ENCODE measurements at regions of chr3 and their contacts with region 1.

Region 1: GRCh38 chr3:28109829-28110228 is 131.6 kb upstream of the CMC1 start:
- DNase-seq: no peak
- ATAC-seq: no peak
- H3K4me3 ChIP-seq: no peak overlapping the region
- H3K27ac ChIP-seq: no peak overlapping the region
- H3K4me1 ChIP-seq: no peaks in the 10 kb centered on the region
- H3K27me3 ChIP-seq: no peaks in the 10 kb centered on the region
- CTCF ChIP-seq: no peak
- EP300 ChIP-seq: no peak
- POLR2A ChIP-seq: no peak
- RAD21 ChIP-seq: no peak

Region 2: DNA sequence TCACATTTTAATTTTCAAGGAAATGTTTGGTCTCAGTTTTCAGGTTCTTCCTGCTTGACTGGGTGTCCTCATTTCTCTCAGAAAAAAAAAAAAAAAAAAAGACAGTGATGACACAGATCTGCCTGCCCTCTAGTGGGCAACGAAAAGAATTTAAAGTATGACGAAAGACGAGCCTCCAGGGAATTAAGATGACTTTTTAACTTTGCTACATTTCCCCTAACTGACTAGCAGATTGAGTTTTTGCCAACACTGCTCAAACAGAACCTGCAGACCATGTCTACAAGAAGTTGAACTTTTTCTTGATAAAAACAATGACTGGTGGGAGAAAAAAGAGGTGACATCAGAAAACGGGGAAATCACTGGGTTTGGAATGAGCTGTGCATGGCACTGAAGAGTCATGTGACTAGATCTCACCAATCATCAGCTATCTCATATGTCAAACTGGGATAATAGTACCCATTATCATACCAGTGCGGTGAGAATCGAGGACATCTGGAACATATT is 428.5 kb before region 1 on chr3:
- CTCF ChIA-PET with region 1: no interaction called
- POLR2A ChIA-PET with region 1: no interaction called
- RAD21 ChIA-PET with region 1: no interaction called
- SMC1A ChIA-PET with region 1: no interaction called
- in situ Hi-C with region 1: no loop called
- intact Hi-C with region 1: no loop called
- DNase-seq: peak; percentile 38
- ATAC-seq: peak; percentile 87
- H3K4me3 ChIP-seq: no peak overlapping the region
- H3K27ac ChIP-seq: no peak overlapping the region
- H3K4me1 ChIP-seq: no peaks in the 10 kb centered on the region
- H3K27me3 ChIP-seq: no peaks in the 10 kb centered on the region
- CTCF ChIP-seq: peak; percentile 47 to 79 (median 61)
- EP300 ChIP-seq: no peak
- POLR2A ChIP-seq: no peak
- RAD21 ChIP-seq: peak; percentile 91

Region 3: DNA sequence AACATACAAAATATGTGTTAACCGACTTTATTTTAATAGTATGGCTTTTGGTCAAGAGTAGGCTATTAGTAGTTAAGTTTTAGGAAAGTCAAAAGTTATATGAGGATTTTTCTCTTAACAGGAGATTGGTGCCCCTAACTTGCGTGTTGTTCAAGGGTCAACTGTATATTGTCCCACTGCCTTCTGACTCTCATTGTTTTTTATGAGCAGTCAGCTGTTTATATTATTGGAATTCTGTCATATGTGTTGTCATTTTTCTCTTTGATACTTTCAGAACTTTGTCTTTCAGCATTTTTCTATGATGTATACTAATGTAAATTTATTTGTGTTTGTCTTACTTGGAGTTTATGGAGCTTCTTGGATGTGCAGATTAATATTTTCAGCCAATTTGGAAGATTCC is 10.5 kb before region 1 on chr3:
- CTCF ChIA-PET with region 1: interaction called, 3 read pairs
- POLR2A ChIA-PET with region 1: interaction called, 3 read pairs
- RAD21 ChIA-PET with region 1: interaction called, 3 read pairs
- SMC1A ChIA-PET with region 1: interaction called, 10 read pairs
- in situ Hi-C with region 1: no loop called
- intact Hi-C with region 1: no loop called
- DNase-seq: no peak
- ATAC-seq: no peak
- H3K4me3 ChIP-seq: no peak overlapping the region
- H3K27ac ChIP-seq: no peak overlapping the region
- H3K4me1 ChIP-seq: no peaks in the 10 kb centered on the region
- H3K27me3 ChIP-seq: no peaks in the 10 kb centered on the region
- CTCF ChIP-seq: no peak
- EP300 ChIP-seq: no peak
- POLR2A ChIP-seq: no peak
- RAD21 ChIP-seq: no peak

Region 4: DNA sequence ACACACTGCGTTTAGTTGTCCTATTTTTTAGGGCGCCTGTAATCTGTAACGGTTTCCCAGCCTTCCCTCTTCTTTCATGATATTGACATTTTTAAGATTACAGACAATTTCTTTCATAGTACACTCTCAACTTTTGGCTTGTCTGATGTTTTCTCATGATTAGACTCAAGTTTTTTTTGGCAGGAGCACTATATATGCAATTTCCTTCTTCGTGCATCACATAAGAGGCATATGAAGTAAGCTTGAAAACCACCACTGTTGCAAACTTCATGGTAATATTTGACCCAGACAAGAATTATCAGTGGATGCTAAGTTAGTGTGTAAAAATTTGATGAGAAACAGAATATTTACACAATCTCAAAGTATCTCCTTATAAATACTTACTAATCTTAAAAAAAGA is 12.4 kb after region 1 on chr3:
- CTCF ChIA-PET with region 1: interaction called, 3 read pairs
- POLR2A ChIA-PET with region 1: no interaction called
- RAD21 ChIA-PET with region 1: interaction called, 7 read pairs
- SMC1A ChIA-PET with region 1: interaction called, 27 read pairs
- in situ Hi-C with region 1: no loop called
- intact Hi-C with region 1: no loop called
- DNase-seq: no peak
- ATAC-seq: no peak
- H3K4me3 ChIP-seq: no peak overlapping the region
- H3K27ac ChIP-seq: no peak overlapping the region
- H3K4me1 ChIP-seq: no peaks in the 10 kb centered on the region
- H3K27me3 ChIP-seq: no peaks in the 10 kb centered on the region
- CTCF ChIP-seq: no peak
- EP300 ChIP-seq: no peak
- POLR2A ChIP-seq: no peak
- RAD21 ChIP-seq: no peak